ENCODE measurements at regions of chr9 and their contacts with region 1.

Region 1: DNA sequence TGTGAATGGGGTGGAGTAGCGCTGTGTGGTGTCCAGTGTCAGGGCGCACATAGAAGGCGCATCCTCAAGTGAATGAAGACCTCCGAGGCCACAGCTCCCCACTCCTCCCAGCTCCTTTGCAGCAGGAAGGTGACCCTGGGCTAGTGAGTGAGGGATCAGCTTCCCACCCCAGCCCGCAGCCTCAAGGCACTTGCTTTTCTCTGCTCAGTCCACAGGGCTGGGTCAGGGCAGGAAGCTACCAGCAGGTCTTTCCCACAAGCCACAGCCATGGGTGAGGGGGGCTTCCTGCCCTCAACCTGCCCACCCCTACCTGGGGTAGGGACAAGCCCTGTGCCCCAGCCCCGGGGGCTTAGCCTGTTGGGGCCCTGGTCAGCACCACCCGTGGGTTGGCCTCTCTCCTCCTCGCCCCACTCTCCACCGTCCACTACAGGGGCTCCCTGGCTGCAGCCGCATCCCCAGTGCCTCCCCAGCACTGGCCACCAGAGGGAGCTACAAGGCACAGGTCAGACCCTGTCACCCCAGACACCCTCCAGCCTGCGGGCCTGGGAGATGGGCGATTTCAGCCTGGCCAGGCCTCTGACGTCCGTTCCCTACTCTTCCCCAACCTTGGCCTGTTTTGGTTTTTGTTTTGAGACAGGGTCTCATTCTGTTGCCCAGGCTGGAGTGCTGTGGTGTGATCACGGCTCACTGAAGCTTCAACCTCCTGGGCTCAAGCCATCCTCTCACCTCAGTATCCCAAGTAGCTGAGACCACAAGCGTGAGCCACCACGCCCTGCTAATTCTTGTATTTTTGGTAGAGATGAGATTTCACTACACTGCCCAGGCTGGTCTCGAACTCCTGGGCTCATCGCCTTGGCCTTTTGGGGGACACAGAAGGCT is 1.3 kb upstream of the ABCA2 start:
- DNase-seq: peak; percentile 84
- ATAC-seq: peak; percentile 53
- H3K4me3 Mint-ChIP-seq: peak overlapping the region; percentile 63
- H3K27ac Mint-ChIP-seq: peak overlapping the region; percentile 32
- H3K4me1 Mint-ChIP-seq: peaks cover 46% of the 10 kb centered on the region
- H3K27me3 Mint-ChIP-seq: no peaks in the 10 kb centered on the region
- CTCF ChIP-seq: peak; percentile 65

Region 2: DNA sequence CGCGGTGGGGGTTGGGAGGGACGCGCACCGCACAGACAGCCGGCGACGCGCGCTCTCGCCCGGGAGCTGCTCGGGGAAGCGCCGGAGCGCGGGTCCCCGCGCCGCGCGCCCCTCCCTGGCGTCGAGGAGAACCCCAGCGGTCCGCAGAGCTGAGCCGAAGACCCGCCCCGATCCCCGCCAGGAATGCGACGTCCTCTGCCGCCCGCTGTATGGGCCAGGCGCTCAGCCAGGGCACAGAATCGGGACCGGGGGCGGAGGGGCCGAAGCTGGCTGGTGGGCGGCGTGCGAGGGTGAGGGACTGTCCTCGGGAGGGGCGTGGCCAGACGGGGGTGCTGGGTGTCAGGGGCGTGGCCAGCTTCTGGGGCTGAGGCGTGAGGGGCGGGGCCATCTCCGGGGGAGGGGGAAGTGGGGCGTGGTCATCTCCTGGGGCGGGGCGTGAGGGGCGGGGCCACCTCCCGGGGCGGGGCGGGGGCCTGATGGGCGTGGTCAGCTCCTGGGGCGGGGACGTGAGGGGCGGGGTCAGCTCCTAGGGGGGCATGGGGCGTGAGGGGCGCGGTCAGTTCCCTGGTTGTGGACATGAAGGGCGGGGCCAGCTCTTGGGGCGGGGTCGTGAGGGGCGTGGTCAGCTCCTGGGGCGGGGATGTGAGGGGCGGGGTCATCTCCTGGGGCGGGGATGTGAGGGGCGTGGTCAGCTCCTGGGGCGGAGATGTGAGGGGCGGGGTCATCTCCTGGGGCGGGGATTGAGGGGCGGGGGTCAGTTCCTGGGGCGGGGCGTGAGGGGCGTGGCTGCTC is 51.0 kb before region 1 on chr9:
- CTCF ChIA-PET with region 1: interaction called, 24 read pairs
- POLR2A ChIA-PET with region 1: no interaction called
- intact Hi-C with region 1: no loop called
- DNase-seq: peak; percentile 76
- ATAC-seq: peak; percentile 75
- H3K4me3 Mint-ChIP-seq: no peak overlapping the region
- H3K27ac Mint-ChIP-seq: no peak overlapping the region
- H3K4me1 Mint-ChIP-seq: peaks cover 20% of the 10 kb centered on the region
- H3K27me3 Mint-ChIP-seq: no peaks in the 10 kb centered on the region
- CTCF ChIP-seq: no peak

Region 3: DNA sequence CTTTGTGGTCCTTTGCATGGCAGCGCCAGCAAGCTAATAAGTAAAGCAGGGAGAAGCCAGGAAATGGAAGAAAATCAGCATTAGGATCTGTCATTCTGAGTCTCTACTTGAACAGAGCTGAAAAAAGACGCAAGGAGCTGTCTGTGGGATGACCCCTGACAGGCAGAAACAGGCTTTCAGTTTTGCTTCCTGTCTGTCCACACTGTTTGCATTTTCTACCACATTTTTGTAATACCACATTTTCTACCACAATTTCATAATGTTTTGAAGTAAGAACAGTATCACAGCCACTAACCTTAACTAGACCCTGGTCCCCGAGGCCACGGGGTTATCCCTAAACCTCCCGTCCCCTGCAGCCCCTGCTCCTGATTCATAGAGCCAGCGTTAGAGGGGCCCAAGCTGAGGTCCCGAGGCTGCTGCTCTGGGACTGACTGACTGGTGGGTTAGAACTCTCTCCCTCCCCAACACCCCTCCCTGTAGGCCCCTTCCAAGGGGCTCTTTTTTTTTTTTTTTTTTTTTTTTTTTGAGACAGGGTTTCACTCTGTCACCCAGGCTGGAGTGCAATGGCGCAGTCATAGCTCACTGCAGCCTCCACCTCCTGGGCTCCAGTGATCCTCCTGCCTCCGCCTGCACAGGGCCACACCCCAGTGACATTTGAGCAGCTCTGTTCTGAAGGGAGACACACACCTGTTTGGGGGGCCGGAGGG is 29.0 kb before region 1 on chr9:
- CTCF ChIA-PET with region 1: interaction called, 31 read pairs
- POLR2A ChIA-PET with region 1: interaction called, 6 read pairs
- intact Hi-C with region 1: no loop called
- DNase-seq: peak; percentile 84
- ATAC-seq: peak; percentile 81
- H3K4me3 Mint-ChIP-seq: no peak overlapping the region
- H3K27ac Mint-ChIP-seq: peak overlapping the region; percentile 25
- H3K4me1 Mint-ChIP-seq: peaks cover 37% of the 10 kb centered on the region
- H3K27me3 Mint-ChIP-seq: peaks cover 5% of the 10 kb centered on the region
- CTCF ChIP-seq: no peak

Region 4: GRCh38 chr9:137040568-137040967 is 11.3 kb after region 1 on chr9:
- CTCF ChIA-PET with region 1: interaction called, 42 read pairs
- POLR2A ChIA-PET with region 1: interaction called, 9 read pairs
- intact Hi-C with region 1: no loop called
- DNase-seq: no peak
- ATAC-seq: no peak
- H3K4me3 Mint-ChIP-seq: no peak overlapping the region
- H3K27ac Mint-ChIP-seq: no peak overlapping the region
- H3K4me1 Mint-ChIP-seq: peaks cover 8% of the 10 kb centered on the region
- H3K27me3 Mint-ChIP-seq: peaks cover 12% of the 10 kb centered on the region
- CTCF ChIP-seq: no peak

Region 5: GRCh38 chr9:137070201-137070905 is 41.1 kb after region 1 on chr9 and contains the start of gene SAPCD2:
- CTCF ChIA-PET with region 1: interaction called, 109 read pairs
- POLR2A ChIA-PET with region 1: no interaction called
- intact Hi-C with region 1: no loop called
- DNase-seq: peak; percentile 92
- ATAC-seq: peak; percentile 87
- H3K4me3 Mint-ChIP-seq: peak within 1 kb of the TSS; percentile 68
- H3K27ac Mint-ChIP-seq: peak within 1 kb of the TSS; percentile 62
- H3K4me1 Mint-ChIP-seq: peaks cover 7% of the 10 kb centered on the region
- H3K27me3 Mint-ChIP-seq: peaks cover 1% of the 10 kb centered on the region
- CTCF ChIP-seq: no peak
- total RNA-seq, gene SAPCD2: 13.5 to 13.7 TPM